PC-3 (cell line): ENCODE measurements at regions of chr5 and their contacts with region 1.

Region 1: GRCh38 chr5:157820593-157821252 is 38.2 kb downstream of the CLINT1 start:
- DNase-seq: peak; percentile 78
- ATAC-seq: peak; percentile 80
- H3K4me3 ChIP-seq: no peak overlapping the region
- H3K27ac ChIP-seq: no peak overlapping the region
- H3K4me1 ChIP-seq: peaks cover 6% of the 10 kb centered on the region
- H3K27me3 ChIP-seq: no peaks in the 10 kb centered on the region
- CTCF ChIP-seq: peak; percentile 92

Region 2: GRCh38 chr5:157917899-157918809 is 97.4 kb after region 1 on chr5:
- CTCF ChIA-PET with region 1: no interaction called
- POLR2A ChIA-PET with region 1: no interaction called
- intact Hi-C with region 1: loop called (anchors 1 kb)
- DNase-seq: peak; percentile 92
- ATAC-seq: peak; percentile 95
- H3K4me3 ChIP-seq: no peak overlapping the region
- H3K27ac ChIP-seq: no peak overlapping the region
- H3K4me1 ChIP-seq: 0 out of 2 replicates have a peak, but pooled peaks cover 3% of the 10 kb centered on the region
- H3K27me3 ChIP-seq: no peaks in the 10 kb centered on the region
- CTCF ChIP-seq: peak; percentile 92

Region 3: GRCh38 chr5:157994906-157995519 is 174.3 kb after region 1 on chr5:
- CTCF ChIA-PET with region 1: interaction called, 7 read pairs
- POLR2A ChIA-PET with region 1: no interaction called
- intact Hi-C with region 1: loop called (anchors 1 kb)
- DNase-seq: peak; percentile 89
- ATAC-seq: peak; percentile 80
- H3K4me3 ChIP-seq: no peak overlapping the region
- H3K27ac ChIP-seq: no peak overlapping the region
- H3K4me1 ChIP-seq: peaks cover 28% of the 10 kb centered on the region
- H3K27me3 ChIP-seq: peaks cover 10% of the 10 kb centered on the region
- CTCF ChIP-seq: peak; percentile 96